ENCODE measurements at regions of chr6 and their contacts with region 1.

Region 1: DNA sequence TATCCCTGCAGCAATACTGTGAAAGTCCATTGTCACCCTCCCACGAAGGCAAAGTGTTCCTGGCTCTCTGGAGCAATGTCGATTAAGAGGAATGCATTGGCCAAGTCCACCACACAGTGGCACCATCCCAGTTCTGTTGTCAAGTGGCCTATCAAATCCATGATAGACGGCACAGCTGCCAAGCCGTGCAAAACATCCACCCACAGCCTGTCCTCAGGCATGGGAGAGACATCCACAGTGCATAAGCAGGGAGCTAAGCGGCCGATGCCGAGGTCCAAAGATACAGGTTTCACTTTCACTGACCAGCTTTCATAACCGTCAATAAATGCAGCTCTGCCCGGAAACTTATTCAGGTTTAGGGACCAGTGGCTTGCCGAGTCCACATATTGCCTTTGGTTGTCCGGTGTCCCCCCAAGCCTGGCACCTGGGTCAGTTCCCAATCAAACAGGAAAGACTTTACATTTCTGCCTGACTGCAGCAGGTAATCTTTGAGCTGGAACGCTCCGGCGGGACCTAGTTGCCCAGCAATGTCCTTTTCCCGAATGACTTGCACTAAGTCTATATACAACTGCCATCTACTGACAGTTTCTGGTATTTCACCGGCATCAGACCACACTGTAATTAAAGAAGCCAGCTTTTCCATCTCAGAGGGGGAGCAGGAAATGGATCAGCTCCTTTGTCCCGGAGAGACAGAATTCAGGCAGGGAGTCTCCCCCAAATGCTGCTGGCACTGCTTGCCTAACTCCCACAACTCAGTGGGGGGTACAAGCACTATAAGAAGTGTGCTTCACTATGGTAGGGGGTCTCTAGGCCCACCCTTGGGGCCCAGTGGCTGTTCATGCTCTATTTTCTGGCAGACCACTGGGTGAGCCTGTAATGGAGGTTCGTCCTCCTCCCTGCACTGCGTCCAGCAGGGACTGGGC is 6.3 kb downstream of the ZKSCAN3 start:
- DNase-seq: peak; percentile 88
- H3K4me3 ChIP-seq: peak overlapping the region; percentile 49 to 66 (median 58)
- H3K27ac ChIP-seq: peak overlapping the region; percentile 84 to 94 (median 85)
- H3K4me1 ChIP-seq: peaks cover 0 to 44% (median 33%) of the 10 kb centered on the region in 4 donors
- H3K27me3 ChIP-seq: no peaks in the 10 kb centered on the region
- CTCF ChIP-seq: peak; percentile 84 to 95 (median 86)
- EP300 ChIP-seq: no peak
- POLR2A ChIP-seq: no peak

Region 2: DNA sequence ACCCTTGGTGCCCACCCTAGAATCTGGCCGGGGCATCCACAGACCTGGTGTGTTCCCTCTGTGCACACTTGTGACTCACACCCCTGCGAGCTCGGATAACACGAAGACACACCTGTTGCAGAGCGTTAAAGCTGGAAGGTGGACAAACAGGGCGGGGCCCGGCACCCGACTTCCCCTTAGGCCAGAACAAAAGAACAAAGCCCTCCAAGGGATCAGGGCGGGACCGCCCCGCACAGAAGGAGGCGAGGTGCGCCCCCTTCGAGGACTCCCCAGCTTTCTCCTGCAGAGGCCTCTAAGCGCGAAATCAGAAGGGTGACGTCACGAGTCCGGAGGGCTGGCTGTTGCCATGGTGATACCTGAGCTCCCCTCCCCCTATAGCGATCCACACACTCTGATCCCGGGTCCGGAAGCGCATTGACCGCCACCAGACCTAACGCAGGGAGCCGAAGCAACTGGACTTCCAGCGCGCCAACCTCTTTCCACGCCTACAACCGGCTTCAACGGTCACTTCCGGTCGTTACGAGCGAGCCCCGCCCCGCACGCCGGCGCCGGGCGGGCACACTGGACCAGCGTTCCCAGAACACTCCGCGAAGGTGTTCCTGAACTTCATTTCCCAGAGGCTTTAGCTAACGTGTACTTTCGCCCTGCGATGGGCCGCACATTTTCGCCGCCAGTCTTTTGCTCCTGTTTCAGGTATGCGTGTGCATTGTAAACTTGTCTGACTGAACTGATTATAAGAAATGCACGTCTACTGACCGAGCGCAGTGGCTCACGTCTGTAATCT is 883.2 kb before region 1 on chr6 and contains the start of gene ZNF184:
- intact Hi-C with region 1: loop called (anchors 10 kb)
- DNase-seq: peak; percentile 98
- H3K4me3 ChIP-seq: peak within 1 kb of the TSS; percentile 54 to 86 (median 84)
- H3K27ac ChIP-seq: peak within 1 kb of the TSS; percentile 89 to 92 (median 90)
- H3K4me1 ChIP-seq: peaks cover 0 to 23% (median 20%) of the 10 kb centered on the region in 4 donors
- H3K27me3 ChIP-seq: no peaks in the 10 kb centered on the region
- CTCF ChIP-seq: peak in 1 of 4 experiments; percentile 31
- EP300 ChIP-seq: peak in 2 of 4 donors; percentile 8 to 57
- POLR2A ChIP-seq: peak; percentile 66 to 75
- total RNA-seq, gene ZNF184: 4.3 to 8.6 (median 7.3) TPM

Region 3: DNA sequence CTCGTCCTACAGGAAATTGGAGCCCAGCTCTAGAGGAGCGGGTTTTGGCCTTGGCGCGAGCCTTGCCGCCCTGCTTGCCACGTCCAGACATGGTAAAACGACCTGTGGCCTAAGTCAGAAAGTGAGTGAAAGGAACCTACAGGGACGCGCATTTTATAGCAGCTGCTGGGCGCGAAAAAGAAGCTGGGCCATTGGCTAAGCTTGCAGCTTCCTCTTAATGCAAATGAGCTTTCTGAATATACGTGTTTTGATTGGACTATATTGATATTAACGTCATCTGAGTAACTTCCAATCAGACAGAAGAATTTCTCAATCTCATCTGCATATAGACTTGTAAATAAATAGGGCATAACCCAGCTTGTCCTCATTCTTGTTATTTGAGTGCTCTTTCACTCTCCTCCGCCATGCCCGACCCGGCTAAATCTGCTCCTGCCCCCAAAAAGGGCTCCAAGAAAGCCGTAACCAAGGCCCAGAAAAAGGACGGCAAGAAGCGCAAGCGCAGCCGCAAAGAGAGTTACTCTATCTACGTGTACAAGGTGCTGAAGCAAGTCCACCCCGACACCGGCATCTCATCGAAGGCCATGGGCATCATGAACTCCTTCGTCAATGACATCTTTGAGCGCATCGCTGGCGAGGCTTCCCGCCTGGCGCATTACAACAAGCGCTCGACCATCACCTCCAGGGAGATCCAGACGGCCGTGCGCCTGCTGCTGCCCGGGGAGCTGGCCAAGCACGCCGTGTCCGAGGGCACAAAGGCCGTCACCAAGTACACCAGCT is 462.8 kb before region 1 on chr6:
- intact Hi-C with region 1: loop called (anchors 10 kb)
- DNase-seq: peak; percentile 81
- H3K4me3 ChIP-seq: peak overlapping the region; percentile 48 to 71 (median 59)
- H3K27ac ChIP-seq: peak overlapping the region in 3 of 4 donors; percentile 33 to 92 (median 59)
- H3K4me1 ChIP-seq: peaks cover 0 to 25% (median 24%) of the 10 kb centered on the region in 4 donors
- H3K27me3 ChIP-seq: peaks cover 22 to 56% (median 47%) of the 10 kb centered on the region in 3 donors
- CTCF ChIP-seq: no peak
- EP300 ChIP-seq: no peak
- POLR2A ChIP-seq: peak in 1 of 2 donors; percentile 84

Region 4: DNA sequence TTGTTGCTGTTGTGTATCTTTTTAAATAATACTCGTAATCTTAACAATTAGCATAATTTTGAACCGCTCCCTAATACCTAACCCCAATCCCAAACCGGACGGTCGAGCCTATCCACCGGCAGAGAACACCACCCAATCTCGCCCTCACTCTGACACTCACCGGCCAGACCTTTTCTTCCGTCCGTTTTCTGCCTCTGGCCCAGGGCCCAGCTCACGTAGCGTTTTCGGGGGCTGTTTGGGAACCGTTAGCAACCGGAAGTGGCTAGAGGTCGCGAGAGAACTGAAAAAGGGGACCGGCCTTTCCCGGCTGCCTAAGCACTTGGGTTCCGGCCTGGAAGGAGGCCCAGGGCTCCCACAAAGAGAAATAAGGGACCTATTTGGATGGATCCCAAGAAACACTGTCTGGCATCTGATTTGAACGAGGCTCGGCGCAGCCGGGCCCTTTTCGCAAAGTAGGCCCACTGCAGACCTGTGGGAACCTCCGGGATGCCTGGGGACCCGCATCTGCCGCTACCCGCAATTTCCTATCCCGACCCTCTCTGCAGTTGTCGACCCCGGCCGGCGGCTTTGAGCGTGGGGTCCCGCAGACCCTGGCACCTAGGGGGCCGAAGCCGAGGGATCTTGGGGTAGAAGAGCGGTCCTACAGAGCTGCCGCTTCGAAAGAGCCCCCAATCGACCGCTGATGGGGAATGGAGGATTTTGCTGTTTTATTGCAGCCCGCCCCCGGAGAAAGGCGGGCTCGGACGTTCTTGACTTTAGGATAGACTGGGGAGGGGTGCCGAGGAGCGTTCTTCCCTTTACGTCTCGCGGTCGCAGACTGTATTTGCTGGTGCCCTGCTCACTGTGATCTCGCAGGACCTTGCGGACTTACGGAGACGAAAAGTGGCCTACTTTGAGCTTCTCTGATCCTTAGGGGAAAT is 219.2 kb before region 1 on chr6:
- intact Hi-C with region 1: loop called (anchors 2 kb)
- DNase-seq: peak; percentile 98
- H3K4me3 ChIP-seq: peak overlapping the region; percentile 66 to 89 (median 73)
- H3K27ac ChIP-seq: peak overlapping the region; percentile 96 to 98 (median 96)
- H3K4me1 ChIP-seq: peaks cover 0 to 42% (median 26%) of the 10 kb centered on the region in 4 donors
- H3K27me3 ChIP-seq: no peaks in the 10 kb centered on the region
- CTCF ChIP-seq: no peak
- EP300 ChIP-seq: peak in 1 of 4 donors; percentile 21
- POLR2A ChIP-seq: no peak

Region 5: DNA sequence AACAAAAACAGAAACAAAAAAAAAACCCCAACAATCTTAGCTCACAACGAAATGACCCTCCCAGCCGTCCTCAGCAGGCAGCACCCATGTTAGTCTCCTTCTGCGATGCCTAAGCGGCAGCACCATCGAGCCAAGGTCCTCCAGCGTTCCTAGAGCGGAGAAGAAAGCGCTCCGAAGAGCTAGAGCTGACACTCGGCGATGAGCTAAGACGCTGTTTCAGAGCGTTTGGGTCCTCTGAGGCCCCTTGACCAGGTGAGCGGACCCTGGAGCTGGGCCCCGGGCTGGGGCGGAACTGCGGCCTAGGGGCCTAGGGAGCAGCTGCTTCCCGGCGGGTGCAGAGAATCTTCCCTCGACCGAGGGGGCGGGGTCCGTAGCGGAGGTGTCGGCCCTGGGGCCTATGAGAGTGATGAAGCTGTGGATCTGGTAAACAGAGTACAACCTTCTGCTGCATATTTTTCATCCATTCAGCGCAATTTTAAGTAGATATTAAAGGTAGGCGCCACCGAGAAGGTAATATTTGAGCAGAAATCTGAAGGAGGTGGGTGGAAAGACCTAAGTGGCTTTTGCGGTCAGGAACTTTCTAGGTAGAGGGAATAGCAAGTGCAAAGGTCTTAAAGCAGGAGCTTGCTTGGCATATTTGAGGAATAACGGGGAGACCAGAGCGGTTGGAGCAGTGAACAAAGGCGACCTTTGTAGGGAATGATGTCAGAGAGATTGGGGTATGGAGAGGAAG is 88.9 kb before region 1 on chr6 and contains the start of gene ZSCAN26:
- intact Hi-C with region 1: loop called (anchors 1 kb)
- DNase-seq: peak; percentile 90
- H3K4me3 ChIP-seq: peak within 1 kb of the TSS; percentile 68 to 80 (median 73)
- H3K27ac ChIP-seq: peak within 1 kb of the TSS; percentile 83 to 91 (median 88)
- H3K4me1 ChIP-seq: peaks cover 0 to 32% (median 22%) of the 10 kb centered on the region in 4 donors
- H3K27me3 ChIP-seq: no peaks in the 10 kb centered on the region
- CTCF ChIP-seq: no peak
- EP300 ChIP-seq: no peak
- POLR2A ChIP-seq: peak; percentile 52 to 55
- total RNA-seq, gene ZSCAN26: 25.5 to 29.4 (median 27.6) TPM

Region 6: GRCh38 chr6:28335564-28336283 is 20.3 kb before region 1 on chr6 and contains the start of gene ZSCAN31:
- intact Hi-C with region 1: loop called (anchors 2 kb)
- DNase-seq: peak; percentile 99
- H3K4me3 ChIP-seq: peak within 1 kb of the TSS; percentile 54 to 73 (median 65)
- H3K27ac ChIP-seq: peak within 1 kb of the TSS; percentile 91 to 99 (median 95)
- H3K4me1 ChIP-seq: peaks cover 4 to 35% (median 19%) of the 10 kb centered on the region in 4 donors
- H3K27me3 ChIP-seq: no peaks in the 10 kb centered on the region
- CTCF ChIP-seq: no peak
- EP300 ChIP-seq: peak in 1 of 4 donors; percentile 31
- POLR2A ChIP-seq: peak; percentile 89 to 91
- total RNA-seq, gene ZSCAN31: 22.8 to 41.7 (median 30.8) TPM

Region 7: GRCh38 chr6:28371706-28372451 is 15.9 kb after region 1 on chr6:
- intact Hi-C with region 1: no loop called
- DNase-seq: no peak
- H3K4me3 ChIP-seq: no peak overlapping the region
- H3K27ac ChIP-seq: no peak overlapping the region
- H3K4me1 ChIP-seq: no peaks in the 10 kb centered on the region
- H3K27me3 ChIP-seq: no peaks in the 10 kb centered on the region
- CTCF ChIP-seq: no peak
- EP300 ChIP-seq: no peak
- POLR2A ChIP-seq: no peak

Measured in sigmoid colon (tissue), 7 donors.